Activated naive CD4-positive, alpha-beta T cell treated with anti-CD3 and anti-CD28 coated beads for 36 hours (primary cell): ENCODE measurements at regions of chr16 and their contacts with region 1.

Region 1: DNA sequence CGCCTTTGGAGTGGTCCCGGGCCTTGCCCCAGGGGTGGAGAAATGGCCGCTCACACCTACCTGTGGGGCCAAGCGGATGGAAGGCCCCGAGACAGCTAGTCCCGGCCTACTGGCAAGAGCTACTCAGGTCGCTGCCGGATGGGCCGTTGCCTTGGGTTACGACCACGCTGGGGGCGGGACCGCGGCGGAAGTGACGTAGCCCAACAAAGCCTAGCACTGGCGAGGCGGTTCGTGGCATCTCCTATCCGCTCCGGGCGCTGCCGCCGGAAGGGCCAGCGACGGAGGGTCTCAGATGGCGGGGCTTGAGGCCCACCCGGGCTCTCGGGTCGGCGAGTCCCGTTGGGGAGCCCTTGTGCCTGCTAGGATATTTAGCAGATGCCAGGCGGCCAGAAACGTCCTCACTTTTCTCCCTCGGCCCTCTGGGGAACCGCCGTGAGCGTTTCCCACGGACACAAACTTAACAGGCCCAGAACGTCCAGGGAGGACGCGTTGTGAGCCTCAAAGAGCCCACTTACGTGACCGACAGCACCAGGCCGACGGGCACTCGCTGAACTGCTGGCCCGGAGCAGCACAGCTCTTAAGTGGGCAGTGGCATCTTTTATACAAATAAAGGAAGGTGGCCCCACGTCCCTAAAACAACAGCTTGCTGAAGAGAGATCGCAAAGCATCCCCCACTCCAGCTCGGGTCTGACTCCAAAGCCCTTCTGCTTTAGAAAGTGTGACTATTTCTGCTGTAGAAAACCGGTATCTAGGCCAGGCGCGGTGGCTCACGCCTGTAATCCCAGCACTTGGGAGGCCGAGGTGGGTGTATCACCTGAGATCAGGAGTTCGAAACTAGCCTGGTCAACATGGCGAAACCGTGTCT is at the start of gene C16orf46:
- DNase-seq: peak; percentile 99
- H3K4me3 Mint-ChIP-seq: no peak within 1 kb of the TSS
- H3K27ac Mint-ChIP-seq: no peak within 1 kb of the TSS
- H3K4me1 Mint-ChIP-seq: peaks cover 4% of the 10 kb centered on the region
- H3K27me3 Mint-ChIP-seq: no peaks in the 10 kb centered on the region
- total RNA-seq, gene C16orf46: 0.74 TPM in 1 of 2 experiments, not detected in the other

Region 2: DNA sequence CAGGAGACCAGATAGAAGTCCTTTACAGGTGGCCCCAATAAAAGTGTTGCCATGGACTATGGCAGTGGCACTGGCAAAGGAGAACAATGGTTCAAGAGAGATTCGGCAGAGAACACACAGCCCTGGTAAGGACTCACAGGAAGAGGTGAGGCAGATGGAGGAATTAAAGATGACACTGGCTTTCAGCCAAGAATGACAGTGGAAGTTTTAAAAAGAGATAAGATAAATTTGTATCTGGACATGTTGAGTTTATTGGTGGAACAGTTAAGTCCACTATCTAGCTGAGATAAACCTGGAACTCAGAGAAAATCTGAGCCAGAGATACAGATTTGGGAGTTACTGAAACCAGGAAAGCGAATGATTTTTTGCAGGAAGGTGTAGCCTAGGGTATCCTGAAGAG is 90.8 kb before region 1 on chr16:
- CTCF ChIA-PET with region 1: no interaction called
- intact Hi-C with region 1: no loop called
- DNase-seq: no peak
- H3K4me3 Mint-ChIP-seq: no peak overlapping the region
- H3K27ac Mint-ChIP-seq: no peak overlapping the region
- H3K4me1 Mint-ChIP-seq: peaks cover 39% of the 10 kb centered on the region
- H3K27me3 Mint-ChIP-seq: no peaks in the 10 kb centered on the region

Region 3: DNA sequence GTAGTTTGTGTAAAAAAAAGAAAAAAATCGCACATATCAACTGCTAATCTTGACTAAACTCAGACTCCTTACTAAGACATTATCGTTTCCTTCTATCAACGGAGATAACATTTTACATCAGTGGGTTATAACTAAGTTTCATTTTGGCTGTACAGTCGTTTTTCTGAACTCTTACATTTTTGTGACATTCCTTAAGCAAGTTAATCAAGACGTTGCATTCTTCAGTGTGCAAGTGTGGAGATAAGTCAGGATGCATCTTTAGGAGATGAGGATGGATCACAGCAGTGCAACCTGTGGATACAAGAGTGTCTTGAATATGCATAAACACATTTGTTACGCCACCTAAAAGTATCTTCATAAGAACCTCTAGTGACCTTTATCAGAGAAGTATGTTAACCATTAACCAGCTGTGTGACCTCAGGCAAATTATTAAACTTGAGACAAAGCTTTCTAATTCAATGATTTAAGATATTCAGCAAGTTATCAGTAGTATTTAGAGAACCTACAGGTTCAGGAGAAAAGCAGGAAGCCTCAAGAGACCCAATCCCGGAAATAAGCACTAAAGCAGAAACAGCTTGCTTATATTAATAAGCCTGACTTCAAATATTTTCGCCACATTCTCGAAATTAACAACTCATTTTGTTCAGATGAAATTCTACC is 80.0 kb before region 1 on chr16:
- CTCF ChIA-PET with region 1: interaction called, 3 read pairs
- intact Hi-C with region 1: loop called (anchors 2 kb)
- DNase-seq: no peak
- H3K4me3 Mint-ChIP-seq: peak overlapping the region; percentile 75
- H3K27ac Mint-ChIP-seq: peak overlapping the region; percentile 88
- H3K4me1 Mint-ChIP-seq: peaks cover 70% of the 10 kb centered on the region
- H3K27me3 Mint-ChIP-seq: no peaks in the 10 kb centered on the region

Region 4: DNA sequence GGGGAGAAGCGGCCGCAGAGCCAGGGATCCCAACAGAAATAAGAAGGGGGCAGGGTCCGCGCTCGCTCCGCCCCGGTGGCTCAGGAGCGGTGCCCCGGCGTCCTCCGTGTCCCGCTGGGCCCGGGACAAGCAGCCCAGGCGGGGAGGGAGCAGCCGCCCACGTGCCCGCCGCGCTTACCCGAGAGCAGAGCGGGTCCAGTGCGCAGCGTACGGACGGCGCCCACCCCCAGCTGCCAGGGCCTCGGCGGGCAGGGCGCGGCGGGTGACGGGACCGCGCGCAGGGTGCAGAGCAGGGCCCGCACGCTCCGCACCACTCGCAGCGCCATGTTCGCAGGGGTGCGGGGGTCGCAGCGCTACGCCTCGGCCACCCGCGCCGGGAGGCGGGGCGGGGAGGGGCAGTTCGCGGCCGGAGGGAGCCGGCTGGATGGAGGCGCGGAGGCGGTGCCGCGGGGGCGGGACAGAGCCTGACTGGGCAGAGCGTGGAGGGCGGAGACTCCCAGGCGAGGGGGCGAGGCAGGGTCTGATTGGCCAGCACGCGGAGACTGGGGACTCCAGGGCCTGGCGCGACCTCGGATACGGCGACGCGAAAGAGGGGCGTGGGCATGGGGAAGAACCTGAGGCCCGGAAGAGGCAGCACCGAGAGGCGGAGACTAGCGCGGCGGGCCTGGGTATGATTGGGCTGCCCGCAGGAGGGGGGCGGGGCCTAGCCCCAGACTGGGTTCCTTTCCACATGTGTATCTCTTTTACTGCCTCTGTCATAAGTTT is 18.8 kb after region 1 on chr16 and contains the start of gene GCSH:
- CTCF ChIA-PET with region 1: no interaction called
- intact Hi-C with region 1: loop called (anchors 1 kb)
- DNase-seq: peak; percentile 98
- H3K4me3 Mint-ChIP-seq: peak within 1 kb of the TSS; percentile 78
- H3K27ac Mint-ChIP-seq: peak within 1 kb of the TSS; percentile 51
- H3K4me1 Mint-ChIP-seq: peaks cover 17% of the 10 kb centered on the region
- H3K27me3 Mint-ChIP-seq: no peaks in the 10 kb centered on the region
- total RNA-seq, gene GCSH: 25.7 to 27.4 TPM

Region 5: DNA sequence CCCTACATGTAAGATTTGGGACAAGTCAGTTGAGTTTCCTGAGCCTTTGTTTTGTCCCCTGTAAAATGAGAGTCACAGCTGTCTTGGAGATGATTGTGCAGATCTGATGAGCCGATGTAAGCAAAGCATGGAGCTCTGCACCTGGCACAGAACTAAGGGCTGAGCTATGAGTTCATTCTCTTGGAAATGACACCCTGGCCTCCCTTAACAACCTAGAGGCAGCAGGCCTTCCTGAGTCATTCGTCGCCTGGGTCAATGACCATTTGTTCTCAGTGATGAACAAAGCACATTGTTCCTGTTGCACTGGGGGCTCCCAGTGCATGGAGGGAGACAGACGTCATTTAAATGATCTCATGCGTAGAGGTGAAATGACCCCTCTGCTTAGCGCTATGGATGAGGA is 81.7 kb after region 1 on chr16:
- CTCF ChIA-PET with region 1: no interaction called
- intact Hi-C with region 1: no loop called
- DNase-seq: no peak
- H3K4me3 Mint-ChIP-seq: no peak overlapping the region
- H3K27ac Mint-ChIP-seq: no peak overlapping the region
- H3K4me1 Mint-ChIP-seq: no peaks in the 10 kb centered on the region
- H3K27me3 Mint-ChIP-seq: no peaks in the 10 kb centered on the region